A549 (cell line): ENCODE measurements at regions of chr20 and their contacts with region 1.

Region 1: DNA sequence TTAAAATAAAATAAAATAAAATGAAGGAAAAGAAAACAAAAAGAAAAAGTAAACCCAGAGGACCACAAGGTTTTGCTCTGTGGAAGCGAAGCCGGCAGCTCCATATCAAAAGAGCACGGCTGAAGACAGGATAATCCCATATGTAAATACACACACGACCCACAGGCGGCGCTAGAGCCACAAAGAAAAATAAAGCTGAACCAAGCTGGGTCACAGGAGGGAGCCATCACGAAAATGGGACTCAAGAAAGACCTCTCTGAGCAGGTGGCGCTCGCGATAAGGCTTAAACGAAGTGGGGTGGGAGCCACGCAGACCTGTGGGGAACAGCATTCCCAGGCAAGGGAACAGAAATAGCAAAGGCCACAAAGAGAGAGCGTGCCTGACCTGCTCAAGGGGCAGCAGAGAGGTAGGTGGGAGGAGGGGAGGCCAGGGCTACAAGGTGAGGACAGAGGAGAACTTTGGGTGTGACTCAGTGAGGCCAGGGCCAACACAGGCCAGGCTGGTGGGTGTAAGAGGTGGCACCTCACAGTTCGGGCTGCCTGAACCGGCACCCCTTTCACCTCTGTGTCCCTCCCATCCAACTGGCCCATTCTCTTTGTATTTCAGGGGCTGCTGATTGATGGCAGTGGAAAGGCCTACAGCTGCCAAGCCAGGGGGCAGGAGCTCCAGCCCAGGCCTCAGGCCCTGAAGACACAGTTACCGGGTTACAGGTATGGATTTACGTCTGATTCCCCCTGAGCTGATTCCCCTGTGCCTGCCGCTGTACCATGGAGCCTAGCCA is 26.0 kb downstream of the PTGIS start:
- DNase-seq: peak; percentile 81 to 87
- ATAC-seq: peak; percentile 73 to 87
- H3K4me3 ChIP-seq: no peak overlapping the region
- H3K27ac ChIP-seq: peak overlapping the region; percentile 48 to 61; a peak in 5 of 6 replicates
- H3K4me1 ChIP-seq: 0 out of 3 replicates have a peak, but pooled peaks cover 5% of the 10 kb centered on the region
- CTCF ChIP-seq: peak; percentile 98
- EP300 ChIP-seq: no peak
- POLR2A ChIP-seq: no peak
- RAD21 ChIP-seq: peak; percentile 98

Region 2: GRCh38 chr20:49508435-49509199 is 33.3 kb before region 1 on chr20:
- CTCF ChIA-PET with region 1: interaction called, 12 read pairs
- POLR2A ChIA-PET with region 1: no interaction called
- DNase-seq: peak; percentile 52 to 61
- ATAC-seq: peak; percentile 66 to 80
- H3K4me3 ChIP-seq: no peak overlapping the region
- H3K27ac ChIP-seq: peak overlapping the region; percentile 21 to 50; a peak in 2 of 6 replicates
- H3K4me1 ChIP-seq: peaks cover 12% of the 10 kb centered on the region; the same call in 1 of the 3 replicates
- CTCF ChIP-seq: peak; percentile 81
- EP300 ChIP-seq: no peak
- POLR2A ChIP-seq: no peak
- RAD21 ChIP-seq: peak; percentile 67 to 72

Region 3: DNA sequence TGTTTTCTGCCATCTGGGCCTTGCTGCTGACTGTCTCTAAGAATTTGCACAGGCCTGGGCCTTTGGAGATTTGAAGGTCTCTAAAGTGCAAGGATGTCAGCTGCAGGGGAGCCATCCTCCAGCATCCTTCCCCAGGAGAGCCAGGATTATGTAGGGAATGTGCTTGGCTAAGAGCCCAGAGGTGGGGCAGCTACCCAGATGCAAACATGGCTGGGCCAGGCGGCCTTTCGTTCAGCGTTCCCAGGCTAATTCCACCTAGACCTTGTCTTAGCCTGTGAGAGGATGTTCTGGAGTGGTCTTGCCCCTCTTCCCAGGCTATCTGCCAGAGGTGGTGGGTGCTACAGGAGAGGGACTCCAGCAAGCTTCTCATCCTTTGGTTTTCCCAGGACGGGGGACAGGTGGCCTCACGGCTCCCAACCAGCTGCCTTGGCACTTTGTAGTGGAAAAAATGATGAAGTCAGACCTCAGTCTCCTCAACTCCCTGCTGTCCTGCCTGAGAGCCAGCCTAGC is 33.7 kb after region 1 on chr20:
- CTCF ChIA-PET with region 1: interaction called, 43 read pairs
- POLR2A ChIA-PET with region 1: no interaction called
- DNase-seq: peak in 1 of 2 experiments; percentile 33
- ATAC-seq: peak in 1 of 2 experiments; percentile 55; a peak in 3 of 6 replicates
- H3K4me3 ChIP-seq: no peak overlapping the region
- H3K27ac ChIP-seq: peak overlapping the region; percentile 57 to 67
- H3K4me1 ChIP-seq: peaks cover 22% of the 10 kb centered on the region
- CTCF ChIP-seq: no peak
- EP300 ChIP-seq: no peak
- POLR2A ChIP-seq: no peak
- RAD21 ChIP-seq: no peak

Region 4: DNA sequence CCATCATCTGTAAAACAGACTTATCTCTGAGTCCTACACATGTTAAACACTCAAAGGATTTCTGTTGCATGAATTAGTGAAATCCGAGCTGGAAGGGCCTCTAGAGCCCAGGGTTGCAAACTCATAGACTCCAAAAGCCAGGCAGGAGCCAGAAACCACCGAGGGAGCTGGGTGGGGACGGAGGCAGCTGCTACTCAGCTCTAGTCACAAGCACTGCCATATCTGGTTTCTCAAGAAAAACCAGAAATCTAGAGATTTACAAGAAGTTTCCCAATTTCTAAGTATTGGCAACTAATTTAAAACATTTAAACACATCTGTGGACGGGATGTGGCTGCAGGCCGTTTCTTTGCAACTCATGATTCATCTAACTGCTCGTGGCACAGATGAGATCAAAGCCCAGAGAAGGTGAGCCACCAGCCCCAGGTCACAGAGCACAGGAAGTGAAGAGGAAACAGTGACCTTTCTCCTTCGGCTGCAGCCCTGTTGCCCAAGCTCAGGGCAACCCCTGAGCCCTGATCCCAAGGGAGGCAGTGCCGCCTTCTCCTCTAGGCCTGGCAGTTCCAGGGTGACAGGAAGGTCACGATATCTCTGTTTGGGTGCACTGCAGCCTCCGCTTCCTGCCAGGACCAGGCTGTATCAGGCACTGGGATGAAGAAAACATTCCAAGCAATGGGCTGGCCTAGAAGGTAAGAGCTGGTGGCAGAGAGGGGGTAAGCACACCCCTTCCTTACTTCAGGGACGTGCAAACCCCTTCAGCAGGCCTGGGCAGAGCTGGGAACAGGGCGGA is 52.4 kb after region 1 on chr20:
- CTCF ChIA-PET with region 1: interaction called, 46 read pairs
- POLR2A ChIA-PET with region 1: no interaction called
- DNase-seq: no peak
- ATAC-seq: peak; percentile 30 to 58; a peak in 4 of 6 replicates
- H3K4me3 ChIP-seq: no peak overlapping the region
- H3K27ac ChIP-seq: peak overlapping the region; percentile 53 to 78
- H3K4me1 ChIP-seq: peaks cover 37% of the 10 kb centered on the region
- CTCF ChIP-seq: no peak
- EP300 ChIP-seq: no peak
- POLR2A ChIP-seq: no peak
- RAD21 ChIP-seq: no peak

Region 5: GRCh38 chr20:49676581-49677291 is 134.8 kb after region 1 on chr20:
- CTCF ChIA-PET with region 1: no interaction called
- POLR2A ChIA-PET with region 1: no interaction called
- DNase-seq: peak; percentile 53 to 66
- ATAC-seq: peak in 1 of 2 experiments; percentile 12; a peak in 2 of 6 replicates
- H3K4me3 ChIP-seq: peak overlapping the region; percentile 13; the same call in 1 of the 3 replicates
- H3K27ac ChIP-seq: peak overlapping the region; percentile 96 to 97
- H3K4me1 ChIP-seq: peaks cover 97% of the 10 kb centered on the region
- CTCF ChIP-seq: no peak
- EP300 ChIP-seq: no peak
- POLR2A ChIP-seq: no peak
- RAD21 ChIP-seq: no peak

Region 6: DNA sequence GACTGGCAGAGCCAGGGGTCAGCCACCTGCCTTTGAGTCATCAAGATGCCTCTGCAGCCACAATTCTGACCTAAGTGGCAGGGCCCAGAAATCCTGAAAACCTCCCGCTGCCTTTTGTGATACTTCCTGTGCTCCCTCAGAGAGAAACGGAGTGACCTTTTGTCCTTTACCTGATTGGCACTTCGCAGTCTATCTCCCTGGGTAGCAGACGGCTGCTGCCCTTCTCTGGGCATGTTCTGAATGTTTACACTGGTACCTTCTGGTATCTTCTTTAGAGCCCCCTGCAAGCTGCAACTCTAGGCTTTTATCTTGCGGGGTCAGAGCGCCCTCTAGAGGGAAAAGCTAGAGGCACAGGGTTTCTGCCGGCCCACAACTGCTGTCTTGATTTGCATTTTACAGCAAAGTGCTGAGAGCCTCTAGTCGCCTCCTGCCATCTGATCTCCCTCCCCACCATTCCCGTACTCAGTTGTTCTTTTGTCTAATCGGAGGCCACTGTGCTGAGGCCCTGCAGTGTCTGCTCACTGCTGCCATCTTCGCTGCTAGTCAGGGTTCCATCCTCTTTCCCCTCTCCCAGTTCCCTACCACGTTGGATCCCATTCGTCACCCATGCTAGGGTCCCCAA is 346.5 kb after region 1 on chr20:
- CTCF ChIA-PET with region 1: interaction called, 50 read pairs
- POLR2A ChIA-PET with region 1: no interaction called
- DNase-seq: peak; percentile 66 to 77
- ATAC-seq: peak; percentile 56 to 81; a peak in 5 of 6 replicates
- H3K4me3 ChIP-seq: no peak overlapping the region
- H3K27ac ChIP-seq: peak overlapping the region in 1 of 2 experiments; percentile 71; a peak in 3 of 6 replicates
- H3K4me1 ChIP-seq: peaks cover 18% of the 10 kb centered on the region
- CTCF ChIP-seq: peak; percentile 93
- EP300 ChIP-seq: no peak
- POLR2A ChIP-seq: no peak
- RAD21 ChIP-seq: peak; percentile 87 to 89